Natural killer cell (primary cell): ENCODE measurements at regions of chr3 and their contacts with region 1.

Region 1: GRCh38 chr3:10248184-10249080 is at the start of gene TATDN2:
- DNase-seq: peak; percentile 81 to 98
- ATAC-seq: peak; percentile 94 to 98 (median 94)
- H3K4me3 ChIP-seq: peak within 1 kb of the TSS; percentile 68
- H3K4me3 Mint-ChIP-seq: peak within 1 kb of the TSS; percentile 97
- H3K27ac ChIP-seq: peak within 1 kb of the TSS; percentile 41
- H3K27ac Mint-ChIP-seq: peak within 1 kb of the TSS; percentile 90 to 95
- H3K4me1 ChIP-seq: peaks cover 30% of the 10 kb centered on the region
- H3K4me1 Mint-ChIP-seq: peaks cover 57 to 61% of the 10 kb centered on the region in 2 donors
- H3K27me3 ChIP-seq: no peaks in the 10 kb centered on the region
- H3K27me3 Mint-ChIP-seq: no peaks in the 10 kb centered on the region
- CTCF ChIP-seq: no peak
- total RNA-seq, gene TATDN2: 75.6 to 99.4 (median 88.4) TPM

Region 2: GRCh38 chr3:9986237-9986725 is 262.2 kb before region 1 on chr3:
- intact Hi-C with region 1: loop called (anchors 10 kb)
- DNase-seq: no peak
- ATAC-seq: peak; percentile 58 to 66 (median 63)
- H3K4me3 ChIP-seq: peak overlapping the region; percentile 96
- H3K4me3 Mint-ChIP-seq: peak overlapping the region; percentile 99
- H3K27ac ChIP-seq: peak overlapping the region; percentile 86
- H3K27ac Mint-ChIP-seq: peak overlapping the region; percentile 97 to 98
- H3K4me1 ChIP-seq: peaks cover 18% of the 10 kb centered on the region
- H3K4me1 Mint-ChIP-seq: peaks cover 18 to 19% of the 10 kb centered on the region in 2 donors
- H3K27me3 ChIP-seq: no peaks in the 10 kb centered on the region
- H3K27me3 Mint-ChIP-seq: no peaks in the 10 kb centered on the region
- CTCF ChIP-seq: no peak

Region 3: DNA sequence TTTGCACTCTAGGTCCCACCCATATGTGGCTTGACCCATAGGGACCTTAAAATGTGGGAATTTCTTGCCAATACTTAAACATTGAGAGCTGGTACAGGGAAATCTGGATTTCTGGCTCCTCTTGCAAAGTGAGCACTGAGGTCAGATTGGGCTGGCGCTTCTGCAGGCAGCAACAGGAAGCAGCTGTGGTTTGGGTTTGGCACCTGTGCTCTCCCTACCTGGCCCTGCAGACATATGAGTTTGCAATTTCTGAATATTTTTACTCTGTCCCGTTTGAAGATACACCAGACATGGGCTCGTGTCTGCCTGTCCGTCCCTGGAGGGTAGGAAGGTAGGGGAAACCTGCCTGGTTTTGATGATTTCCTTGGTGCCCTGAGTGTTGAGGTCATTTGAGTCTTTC is 147.2 kb after region 1 on chr3:
- intact Hi-C with region 1: no loop called
- DNase-seq: peak in 1 of 2 donors; percentile 71
- ATAC-seq: peak in 1 of 3 donors; percentile 47
- H3K4me3 ChIP-seq: no peak overlapping the region
- H3K4me3 Mint-ChIP-seq: no peak overlapping the region
- H3K27ac ChIP-seq: no peak overlapping the region
- H3K27ac Mint-ChIP-seq: no peak overlapping the region
- H3K4me1 ChIP-seq: peaks cover 35% of the 10 kb centered on the region
- H3K4me1 Mint-ChIP-seq: peaks cover 0 to 10% of the 10 kb centered on the region in 2 donors
- H3K27me3 ChIP-seq: no peaks in the 10 kb centered on the region
- H3K27me3 Mint-ChIP-seq: peaks cover 0 to 3% of the 10 kb centered on the region in 2 donors
- CTCF ChIP-seq: no peak